ENCODE measurements at regions of chr10 and their contacts with region 1.

Region 1: GRCh38 chr10:112183329-112184051 is at the start of gene GPAM:
- DNase-seq: peak; percentile 80 to 93
- ATAC-seq: peak; percentile 95 to 97
- H3K4me3 ChIP-seq: peak within 1 kb of the TSS; percentile 88 to 94 (median 91)
- H3K27ac ChIP-seq: peak within 1 kb of the TSS; percentile 86 to 93 (median 90)
- H3K4me1 ChIP-seq: peaks cover 19 to 27% of the 10 kb centered on the region in 2 donors
- H3K27me3 ChIP-seq: no peaks in the 10 kb centered on the region
- CTCF ChIP-seq: peak in 2 of 5 experiments; percentile 43 to 46
- POLR2A ChIP-seq: peak; percentile 63
- total RNA-seq, gene GPAM: 4.0 to 9.0 (median 4.6) TPM

Region 2: GRCh38 chr10:112122827-112123226 is 60.7 kb before region 1 on chr10:
- in situ Hi-C with region 1: no loop called
- intact Hi-C with region 1: no loop called
- DNase-seq: no peak
- ATAC-seq: no peak
- H3K4me3 ChIP-seq: no peak overlapping the region
- H3K27ac ChIP-seq: no peak overlapping the region
- H3K4me1 ChIP-seq: no peaks in the 10 kb centered on the region
- H3K27me3 ChIP-seq: no peaks in the 10 kb centered on the region
- CTCF ChIP-seq: no peak
- POLR2A ChIP-seq: no peak

Region 3: GRCh38 chr10:112307358-112308124 is 124.1 kb after region 1 on chr10:
- in situ Hi-C with region 1: loop called (anchors 5 to 25 kb)
- intact Hi-C with region 1: loop called (anchors 2 kb)
- DNase-seq: peak in 1 of 2 donors; percentile 21
- ATAC-seq: peak; percentile 70 to 73
- H3K4me3 ChIP-seq: no peak overlapping the region
- H3K27ac ChIP-seq: no peak overlapping the region
- H3K4me1 ChIP-seq: no peaks in the 10 kb centered on the region
- H3K27me3 ChIP-seq: no peaks in the 10 kb centered on the region
- CTCF ChIP-seq: peak; percentile 46 to 83 (median 58)
- POLR2A ChIP-seq: no peak

Region 4: DNA sequence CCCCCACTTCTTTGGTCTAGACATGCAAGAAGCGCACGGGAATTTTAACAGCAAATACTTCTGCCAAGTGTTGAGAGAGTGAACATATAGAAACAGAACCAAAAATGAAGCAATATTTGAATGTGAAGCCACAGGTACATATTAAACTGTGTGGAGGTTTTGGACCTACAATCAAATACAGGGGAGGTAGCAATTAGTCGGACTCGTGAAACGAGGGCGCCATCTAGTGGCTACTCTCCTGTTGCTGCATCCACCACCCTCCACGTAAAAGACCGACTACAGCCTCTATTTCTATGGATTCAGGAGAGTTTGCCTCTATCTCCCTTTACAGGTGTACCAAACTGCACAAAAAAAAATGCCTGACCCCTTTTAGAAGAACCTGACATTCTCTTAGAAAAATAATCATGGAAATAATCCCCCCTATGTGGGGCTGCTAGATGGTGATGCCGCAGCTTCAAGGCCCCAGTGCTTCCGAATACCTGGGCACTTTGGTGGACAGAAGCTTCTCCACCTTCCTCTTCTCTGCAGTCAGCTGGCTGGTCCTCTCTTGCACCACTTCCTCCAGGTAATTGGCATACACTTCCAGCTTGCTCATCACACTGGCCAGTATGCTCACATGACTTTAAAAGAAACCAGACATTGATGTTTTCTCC is 131.5 kb after region 1 on chr10:
- in situ Hi-C with region 1: loop called (anchors 5 to 25 kb)
- intact Hi-C with region 1: loop called (anchors 2 kb)
- DNase-seq: peak; percentile 52 to 53
- ATAC-seq: peak; percentile 76 to 87
- H3K4me3 ChIP-seq: no peak overlapping the region
- H3K27ac ChIP-seq: no peak overlapping the region
- H3K4me1 ChIP-seq: no peaks in the 10 kb centered on the region
- H3K27me3 ChIP-seq: no peaks in the 10 kb centered on the region
- CTCF ChIP-seq: peak; percentile 62 to 93 (median 78)
- POLR2A ChIP-seq: no peak

Region 5: GRCh38 chr10:112446855-112447711 is 263.6 kb after region 1 on chr10 and contains the starts of genes VTI1A and ZDHHC6:
- in situ Hi-C with region 1: loop called (anchors 25 kb)
- intact Hi-C with region 1: loop called (anchors 5 kb)
- DNase-seq: peak; percentile 71 to 83
- ATAC-seq: peak; percentile 96 to 98
- H3K4me3 ChIP-seq: peak within 1 kb of the TSS; percentile 65 to 100 (median 92)
- H3K27ac ChIP-seq: peak within 1 kb of the TSS; percentile 88 to 95 (median 92)
- H3K4me1 ChIP-seq: peaks cover 18 to 19% of the 10 kb centered on the region in 2 donors
- H3K27me3 ChIP-seq: no peaks in the 10 kb centered on the region
- CTCF ChIP-seq: peak in 2 of 5 experiments; percentile 17 to 26
- POLR2A ChIP-seq: peak in 1 of 2 donors; percentile 58
- total RNA-seq, gene VTI1A: 26.5 to 51.2 (median 30.6) TPM
- total RNA-seq, gene ZDHHC6: 7.4 to 11.7 (median 9.7) TPM

Region 6: DNA sequence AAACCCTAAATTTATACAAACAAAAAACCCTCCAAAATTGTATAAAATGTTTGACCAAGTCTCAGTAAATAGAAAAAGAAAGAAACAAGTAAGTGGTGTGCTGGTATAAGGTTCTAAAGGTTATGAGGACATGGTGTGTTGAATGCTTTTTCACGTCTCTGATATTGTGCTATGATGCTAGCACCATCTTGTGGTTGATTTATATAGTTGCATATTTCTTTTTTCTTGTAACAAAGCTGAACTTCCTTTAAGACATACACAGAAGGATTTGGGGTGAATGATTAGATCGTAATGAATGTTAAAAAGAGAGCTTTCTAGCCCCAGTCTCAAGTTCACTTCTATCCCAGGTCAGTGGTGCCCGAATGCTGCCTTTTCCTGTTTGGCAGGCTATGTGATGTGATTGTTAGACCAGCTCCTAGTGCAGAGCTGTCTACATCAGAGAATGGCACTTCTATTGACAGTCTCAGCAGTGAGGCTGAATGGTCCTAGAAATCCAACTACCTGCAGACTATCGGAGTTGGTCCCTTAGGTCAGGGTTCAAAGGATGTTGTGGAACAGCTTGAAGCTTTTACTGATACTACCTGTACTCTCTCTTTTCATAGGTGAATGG is 288.5 kb after region 1 on chr10:
- in situ Hi-C with region 1: loop called in 1 of 4 experiments (anchors 25 kb)
- intact Hi-C with region 1: no loop called
- DNase-seq: no peak
- ATAC-seq: peak in 1 of 2 donors; percentile 56
- H3K4me3 ChIP-seq: no peak overlapping the region
- H3K27ac ChIP-seq: no peak overlapping the region
- H3K4me1 ChIP-seq: no peaks in the 10 kb centered on the region
- H3K27me3 ChIP-seq: no peaks in the 10 kb centered on the region
- CTCF ChIP-seq: peak; percentile 30 to 70 (median 51)
- POLR2A ChIP-seq: no peak